Activated CD4-positive, alpha-beta memory T cell treated with anti-CD3 and anti-CD28 coated beads, Interleukin-2, amount 10 ng/mL, durations not matched to agents 7 days and 5 days (primary cell): ENCODE measurements at regions of chr5 and their contacts with region 1.

Region 1: DNA sequence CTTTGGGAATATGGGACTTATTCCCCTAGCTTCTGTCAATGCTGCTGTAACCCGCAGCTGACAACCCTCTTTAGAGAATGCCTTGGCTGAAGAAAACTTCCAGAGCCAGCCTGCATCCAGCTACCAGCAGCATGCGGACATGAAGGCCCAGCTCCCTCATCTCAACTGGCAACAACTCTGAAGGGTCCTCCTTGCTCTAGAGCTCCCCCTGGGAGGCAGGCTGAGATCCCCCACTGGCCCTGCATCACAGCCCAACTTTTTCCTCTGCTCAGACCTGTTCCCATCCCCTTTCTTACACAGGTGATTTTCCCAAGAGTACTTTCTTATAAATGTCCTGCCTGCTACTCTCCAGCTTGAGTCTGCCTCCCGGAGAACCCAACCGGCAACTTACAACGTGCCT is 18.7 kb upstream of the WNT8A start:
- DNase-seq: no peak
- H3K4me3 Mint-ChIP-seq: no peak overlapping the region
- H3K27ac Mint-ChIP-seq: no peak overlapping the region
- H3K4me1 Mint-ChIP-seq: peaks cover 14% of the 10 kb centered on the region
- H3K27me3 Mint-ChIP-seq: no peaks in the 10 kb centered on the region

Region 2: GRCh38 chr5:137778772-137779564 is 286.1 kb before region 1 on chr5:
- CTCF ChIA-PET with region 1: interaction called, 10 read pairs
- POLR2A ChIA-PET with region 1: no interaction called
- DNase-seq: no peak
- H3K4me3 Mint-ChIP-seq: no peak overlapping the region
- H3K27ac Mint-ChIP-seq: no peak overlapping the region
- H3K4me1 Mint-ChIP-seq: no peaks in the 10 kb centered on the region
- H3K27me3 Mint-ChIP-seq: peaks cover 13% of the 10 kb centered on the region

Region 3: GRCh38 chr5:137923856-137924255 is 141.2 kb before region 1 on chr5:
- CTCF ChIA-PET with region 1: no interaction called
- POLR2A ChIA-PET with region 1: no interaction called
- DNase-seq: no peak
- H3K4me3 Mint-ChIP-seq: no peak overlapping the region
- H3K27ac Mint-ChIP-seq: no peak overlapping the region
- H3K4me1 Mint-ChIP-seq: no peaks in the 10 kb centered on the region
- H3K27me3 Mint-ChIP-seq: no peaks in the 10 kb centered on the region

Region 4: GRCh38 chr5:138054847-138055558 is 10.1 kb before region 1 on chr5:
- CTCF ChIA-PET with region 1: interaction called, 13 read pairs
- POLR2A ChIA-PET with region 1: no interaction called
- DNase-seq: no peak
- H3K4me3 Mint-ChIP-seq: no peak overlapping the region
- H3K27ac Mint-ChIP-seq: no peak overlapping the region
- H3K4me1 Mint-ChIP-seq: peaks cover 24% of the 10 kb centered on the region
- H3K27me3 Mint-ChIP-seq: peaks cover 2% of the 10 kb centered on the region

Region 5: GRCh38 chr5:138077065-138077696 is 12.1 kb after region 1 on chr5:
- CTCF ChIA-PET with region 1: interaction called, 13 read pairs
- POLR2A ChIA-PET with region 1: interaction called, 3 read pairs
- DNase-seq: peak; percentile 57
- H3K4me3 Mint-ChIP-seq: no peak overlapping the region
- H3K27ac Mint-ChIP-seq: no peak overlapping the region
- H3K4me1 Mint-ChIP-seq: peaks cover 17% of the 10 kb centered on the region
- H3K27me3 Mint-ChIP-seq: peaks cover 6% of the 10 kb centered on the region

Region 6: DNA sequence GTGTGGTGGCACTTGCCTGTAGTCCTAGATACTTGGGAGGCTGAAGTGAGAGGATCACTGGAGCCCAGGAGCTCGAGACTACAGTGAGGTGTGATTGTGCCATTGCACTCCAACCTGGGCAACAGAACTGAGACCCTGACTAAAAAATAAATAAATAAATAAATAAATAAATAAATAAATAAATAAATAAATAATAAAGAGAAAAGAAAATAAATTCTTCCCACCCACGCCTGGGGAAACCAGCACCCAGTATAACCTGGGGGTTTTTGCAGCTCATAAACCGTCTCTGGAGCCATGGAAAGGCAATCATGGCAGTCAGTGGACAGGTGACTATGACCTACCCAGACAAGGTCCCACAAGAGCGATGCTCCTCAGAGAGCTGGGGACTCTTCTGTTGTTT is 26.6 kb after region 1 on chr5:
- CTCF ChIA-PET with region 1: no interaction called
- POLR2A ChIA-PET with region 1: no interaction called
- DNase-seq: no peak
- H3K4me3 Mint-ChIP-seq: no peak overlapping the region
- H3K27ac Mint-ChIP-seq: no peak overlapping the region
- H3K4me1 Mint-ChIP-seq: peaks cover 18% of the 10 kb centered on the region
- H3K27me3 Mint-ChIP-seq: peaks cover 24% of the 10 kb centered on the region

Region 7: GRCh38 chr5:138185957-138186447 is 120.9 kb after region 1 on chr5:
- CTCF ChIA-PET with region 1: no interaction called
- POLR2A ChIA-PET with region 1: no interaction called
- DNase-seq: no peak
- H3K4me3 Mint-ChIP-seq: no peak overlapping the region
- H3K27ac Mint-ChIP-seq: no peak overlapping the region
- H3K4me1 Mint-ChIP-seq: peaks cover 4% of the 10 kb centered on the region
- H3K27me3 Mint-ChIP-seq: no peaks in the 10 kb centered on the region